Transverse colon (tissue), 4 donors: ENCODE measurements at regions of chr12 and their contacts with region 1.

Region 1: DNA sequence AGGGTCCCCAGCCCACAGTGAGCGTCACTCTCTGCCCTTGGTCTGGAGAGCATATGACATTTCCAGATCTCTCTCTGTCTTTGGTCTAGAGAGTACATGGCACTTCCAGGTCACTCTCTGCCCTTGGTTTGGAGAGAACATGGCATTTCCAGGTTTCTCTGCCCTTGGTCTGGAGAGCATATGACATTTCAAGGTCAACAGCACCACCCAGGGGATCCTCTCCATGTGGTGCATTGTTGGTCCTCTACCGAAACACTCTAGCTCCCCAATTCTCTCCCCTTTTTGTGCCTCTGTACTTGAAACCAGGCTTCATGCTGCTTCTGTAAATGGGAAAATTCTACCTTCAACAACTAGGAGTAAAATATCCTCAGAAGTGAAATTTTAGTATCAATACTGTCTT is 399.4 kb downstream of the NELL2 start:
- DNase-seq: no peak
- H3K4me3 ChIP-seq: no peak overlapping the region
- H3K27ac ChIP-seq: no peak overlapping the region
- H3K4me1 ChIP-seq: no peaks in the 10 kb centered on the region
- H3K27me3 ChIP-seq: no peaks in the 10 kb centered on the region
- CTCF ChIP-seq: no peak
- EP300 ChIP-seq: no peak
- POLR2A ChIP-seq: no peak

Region 2: GRCh38 chr12:44441155-44441554 is 35.5 kb before region 1 on chr12:
- in situ Hi-C with region 1: no loop called
- intact Hi-C with region 1: loop called (anchors 1 kb)
- DNase-seq: no peak
- H3K4me3 ChIP-seq: no peak overlapping the region
- H3K27ac ChIP-seq: no peak overlapping the region
- H3K4me1 ChIP-seq: no peaks in the 10 kb centered on the region
- H3K27me3 ChIP-seq: no peaks in the 10 kb centered on the region
- CTCF ChIP-seq: no peak
- EP300 ChIP-seq: no peak
- POLR2A ChIP-seq: no peak

Region 3: GRCh38 chr12:44531320-44531971 is 54.8 kb after region 1 on chr12:
- in situ Hi-C with region 1: no loop called
- intact Hi-C with region 1: loop called (anchors 2 kb)
- DNase-seq: no peak
- H3K4me3 ChIP-seq: no peak overlapping the region
- H3K27ac ChIP-seq: no peak overlapping the region
- H3K4me1 ChIP-seq: no peaks in the 10 kb centered on the region
- H3K27me3 ChIP-seq: no peaks in the 10 kb centered on the region
- CTCF ChIP-seq: no peak
- EP300 ChIP-seq: no peak
- POLR2A ChIP-seq: no peak